ENCODE measurements at regions of chr12 and their contacts with region 1.

Region 1: GRCh38 chr12:124917135-124917840 is 2.8 kb upstream of the UBC start:
- DNase-seq: peak; percentile 99
- ATAC-seq: peak; percentile 75
- H3K4me3 ChIP-seq: peak overlapping the region; percentile 45 to 100
- H3K27ac ChIP-seq: peak overlapping the region; percentile 96
- H3K4me1 ChIP-seq: peaks cover 47 to 82% of the 10 kb centered on the region in 2 experiments
- H3K27me3 ChIP-seq: no peaks in the 10 kb centered on the region
- CTCF ChIP-seq: no peak
- POLR2A ChIP-seq: peak; percentile 52
- RAD21 ChIP-seq: no peak

Region 2: GRCh38 chr12:123655420-123655819 is 1261.9 kb before region 1 on chr12:
- CTCF ChIA-PET with region 1: no interaction called
- POLR2A ChIA-PET with region 1: no interaction called
- RAD21 ChIA-PET with region 1: no interaction called
- intact Hi-C with region 1: no loop called
- DNase-seq: no peak
- ATAC-seq: no peak
- H3K4me3 ChIP-seq: no peak overlapping the region
- H3K27ac ChIP-seq: no peak overlapping the region
- H3K4me1 ChIP-seq: no peaks in the 10 kb centered on the region
- H3K27me3 ChIP-seq: no peaks in the 10 kb centered on the region
- CTCF ChIP-seq: no peak
- POLR2A ChIP-seq: no peak
- RAD21 ChIP-seq: no peak

Region 3: GRCh38 chr12:124636138-124636978 is 280.9 kb before region 1 on chr12:
- CTCF ChIA-PET with region 1: no interaction called
- POLR2A ChIA-PET with region 1: no interaction called
- RAD21 ChIA-PET with region 1: no interaction called
- intact Hi-C with region 1: loop called (anchors 5 kb)
- DNase-seq: peak; percentile 40
- ATAC-seq: peak; percentile 15
- H3K4me3 ChIP-seq: no peak overlapping the region
- H3K27ac ChIP-seq: peak overlapping the region; percentile 38; the same call in 1 of the 2 replicates
- H3K4me1 ChIP-seq: peaks cover 51 to 93% of the 10 kb centered on the region in 2 experiments
- H3K27me3 ChIP-seq: no peaks in the 10 kb centered on the region
- CTCF ChIP-seq: no peak
- POLR2A ChIP-seq: no peak
- RAD21 ChIP-seq: no peak

Region 4: DNA sequence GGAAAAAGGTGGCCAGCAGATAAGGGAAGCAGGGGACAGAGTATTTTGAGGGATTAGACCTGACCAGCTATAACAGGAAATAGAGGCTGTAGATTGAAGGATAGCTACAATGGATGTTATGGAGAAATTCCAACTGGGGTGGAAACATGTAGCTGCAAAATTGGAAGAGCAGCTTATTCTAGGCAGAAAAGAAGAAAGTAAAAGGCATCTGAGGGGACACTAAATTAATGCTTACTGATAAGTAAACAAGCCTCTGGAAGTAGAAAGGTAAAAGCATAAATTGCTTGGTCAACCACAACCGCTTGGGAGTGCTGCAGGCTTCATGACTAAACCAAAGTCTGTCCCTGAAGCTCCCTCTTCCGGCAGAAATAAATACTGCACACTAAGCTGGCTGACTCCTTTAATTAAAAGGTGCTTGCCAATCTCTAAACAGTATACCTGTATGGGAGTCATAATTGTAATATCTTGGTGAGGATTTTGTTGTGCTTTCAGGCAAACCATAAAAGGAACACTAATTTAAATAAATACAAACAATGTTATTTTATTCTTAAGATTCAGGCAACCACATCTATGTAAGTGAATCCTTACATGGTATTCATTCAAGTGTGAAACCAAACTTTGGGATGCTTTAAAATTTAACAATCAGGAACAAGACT is 10.6 kb before region 1 on chr12:
- CTCF ChIA-PET with region 1: interaction called, 44 read pairs
- POLR2A ChIA-PET with region 1: interaction called, 18 read pairs
- RAD21 ChIA-PET with region 1: no interaction called
- intact Hi-C with region 1: no loop called
- DNase-seq: peak; percentile 94
- ATAC-seq: peak; percentile 55
- H3K4me3 ChIP-seq: no peak overlapping the region
- H3K27ac ChIP-seq: peak overlapping the region; percentile 26; the same call in 1 of the 2 replicates
- H3K4me1 ChIP-seq: peaks cover 38 to 55% of the 10 kb centered on the region in 2 experiments
- H3K27me3 ChIP-seq: no peaks in the 10 kb centered on the region
- CTCF ChIP-seq: peak in 2 of 3 experiments; percentile 95 to 99; a peak in 4 of 6 replicates
- POLR2A ChIP-seq: no peak
- RAD21 ChIP-seq: no peak

Region 5: GRCh38 chr12:124927201-124928094 is 10.2 kb after region 1 on chr12:
- CTCF ChIA-PET with region 1: interaction called, 3 read pairs
- POLR2A ChIA-PET with region 1: interaction called, 186 read pairs
- RAD21 ChIA-PET with region 1: no interaction called
- intact Hi-C with region 1: no loop called
- DNase-seq: peak; percentile 84
- ATAC-seq: peak; percentile 67
- H3K4me3 ChIP-seq: peak overlapping the region; percentile 16 to 40
- H3K27ac ChIP-seq: peak overlapping the region; percentile 65
- H3K4me1 ChIP-seq: peaks cover 31 to 69% of the 10 kb centered on the region in 2 experiments
- H3K27me3 ChIP-seq: no peaks in the 10 kb centered on the region
- CTCF ChIP-seq: no peak
- POLR2A ChIP-seq: no peak
- RAD21 ChIP-seq: no peak

Region 6: GRCh38 chr12:124940549-124941527 is 23.6 kb after region 1 on chr12:
- CTCF ChIA-PET with region 1: interaction called, 32 read pairs
- POLR2A ChIA-PET with region 1: interaction called, 186 read pairs
- RAD21 ChIA-PET with region 1: interaction called, 3 to 5 read pairs
- intact Hi-C with region 1: loop called (anchors 2 kb)
- DNase-seq: peak; percentile 86
- ATAC-seq: peak; percentile 53
- H3K4me3 ChIP-seq: peak overlapping the region; percentile 45 to 52
- H3K27ac ChIP-seq: peak overlapping the region; percentile 91
- H3K4me1 ChIP-seq: peaks cover 35 to 60% of the 10 kb centered on the region in 2 experiments
- H3K27me3 ChIP-seq: no peaks in the 10 kb centered on the region
- CTCF ChIP-seq: peak in 2 of 3 experiments; percentile 92 to 93; a peak in 4 of 6 replicates
- POLR2A ChIP-seq: no peak
- RAD21 ChIP-seq: no peak

Region 7: GRCh38 chr12:124992874-124993625 is 75.8 kb after region 1 on chr12:
- CTCF ChIA-PET with region 1: no interaction called
- POLR2A ChIA-PET with region 1: no interaction called
- RAD21 ChIA-PET with region 1: no interaction called
- intact Hi-C with region 1: loop called (anchors 1 kb)
- DNase-seq: peak; percentile 91
- ATAC-seq: peak; percentile 50
- H3K4me3 ChIP-seq: peak overlapping the region; percentile 42 to 61
- H3K27ac ChIP-seq: peak overlapping the region; percentile 74
- H3K4me1 ChIP-seq: peaks cover 10 to 34% of the 10 kb centered on the region in 2 experiments; a peak in 3 of 4 replicates
- H3K27me3 ChIP-seq: no peaks in the 10 kb centered on the region
- CTCF ChIP-seq: peak in 2 of 3 experiments; percentile 54 to 56; a peak in 4 of 6 replicates
- POLR2A ChIP-seq: no peak
- RAD21 ChIP-seq: no peak